MCF 10A (cell line): ENCODE measurements at regions of chr12 and their contacts with region 1.

Region 1: GRCh38 chr12:49200919-49201594 is 12.2 kb upstream of the TUBA1A start:
- DNase-seq: peak; percentile 83
- H3K4me3 Mint-ChIP-seq: no peak overlapping the region
- H3K27ac Mint-ChIP-seq: peak overlapping the region; percentile 77
- H3K4me1 Mint-ChIP-seq: peaks cover 16% of the 10 kb centered on the region
- H3K27me3 Mint-ChIP-seq: no peaks in the 10 kb centered on the region
- CTCF ChIP-seq: no peak

Region 2: GRCh38 chr12:49188914-49189367 is 12.1 kb before region 1 on chr12 and contains the start of gene TUBA1A:
- CTCF ChIA-PET with region 1: interaction called, 4 read pairs
- POLR2A ChIA-PET with region 1: interaction called, 39 read pairs
- intact Hi-C with region 1: no loop called
- DNase-seq: peak; percentile 68
- H3K4me3 Mint-ChIP-seq: peak within 1 kb of the TSS; percentile 91
- H3K27ac Mint-ChIP-seq: peak within 1 kb of the TSS; percentile 89
- H3K4me1 Mint-ChIP-seq: peaks cover 12% of the 10 kb centered on the region
- H3K27me3 Mint-ChIP-seq: peaks cover 22% of the 10 kb centered on the region
- CTCF ChIP-seq: no peak
- total RNA-seq, gene TUBA1A: 9.8 and 10.4 TPM in 2 replicates

Region 3: DNA sequence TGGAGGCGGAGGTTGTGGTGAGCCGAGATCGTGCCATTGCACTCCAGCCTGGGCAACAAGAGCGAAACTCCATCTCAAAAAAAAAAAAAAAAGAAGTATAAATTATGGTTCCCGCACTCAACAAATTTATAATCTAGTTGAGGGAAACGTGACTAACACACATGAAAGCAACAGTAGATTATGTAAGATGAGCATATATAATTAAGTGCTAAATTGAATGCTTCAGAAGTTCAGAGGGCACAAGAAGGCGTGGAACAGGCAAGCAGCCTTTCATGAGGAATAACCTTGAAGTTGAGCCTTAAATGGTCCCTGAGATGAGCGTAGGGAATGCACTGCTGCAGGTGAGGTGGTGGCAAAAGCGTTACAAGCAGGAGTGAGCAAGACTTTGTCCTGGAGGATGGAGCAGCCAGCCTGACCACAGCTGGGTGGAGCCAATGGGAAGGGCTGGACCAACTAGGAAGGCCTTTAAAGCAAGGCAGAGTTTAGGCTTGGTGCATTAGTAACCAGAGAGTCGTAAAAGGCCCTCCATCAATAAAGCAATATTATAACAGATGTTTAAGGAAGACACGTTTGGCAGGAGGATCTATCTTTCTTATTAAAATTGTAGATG is 18.5 kb after region 1 on chr12:
- CTCF ChIA-PET with region 1: no interaction called
- POLR2A ChIA-PET with region 1: interaction called, 12 read pairs
- intact Hi-C with region 1: no loop called
- DNase-seq: no peak
- H3K4me3 Mint-ChIP-seq: no peak overlapping the region
- H3K27ac Mint-ChIP-seq: no peak overlapping the region
- H3K4me1 Mint-ChIP-seq: peaks cover 7% of the 10 kb centered on the region
- H3K27me3 Mint-ChIP-seq: no peaks in the 10 kb centered on the region
- CTCF ChIP-seq: no peak

Region 4: GRCh38 chr12:49322708-49323523 is 121.9 kb after region 1 on chr12 and contains the start of gene TROAP:
- CTCF ChIA-PET with region 1: no interaction called
- POLR2A ChIA-PET with region 1: no interaction called
- intact Hi-C with region 1: no loop called
- DNase-seq: peak; percentile 99
- H3K4me3 Mint-ChIP-seq: peak within 1 kb of the TSS; percentile 100
- H3K27ac Mint-ChIP-seq: peak within 1 kb of the TSS; percentile 76
- H3K4me1 Mint-ChIP-seq: peaks cover 13% of the 10 kb centered on the region
- H3K27me3 Mint-ChIP-seq: no peaks in the 10 kb centered on the region
- CTCF ChIP-seq: no peak
- total RNA-seq, gene TROAP: 30.8 and 41.9 TPM in 2 replicates